Pancreas (tissue), 10 donors: ENCODE measurements at regions of chr11 and their contacts with region 1.

Region 1: DNA sequence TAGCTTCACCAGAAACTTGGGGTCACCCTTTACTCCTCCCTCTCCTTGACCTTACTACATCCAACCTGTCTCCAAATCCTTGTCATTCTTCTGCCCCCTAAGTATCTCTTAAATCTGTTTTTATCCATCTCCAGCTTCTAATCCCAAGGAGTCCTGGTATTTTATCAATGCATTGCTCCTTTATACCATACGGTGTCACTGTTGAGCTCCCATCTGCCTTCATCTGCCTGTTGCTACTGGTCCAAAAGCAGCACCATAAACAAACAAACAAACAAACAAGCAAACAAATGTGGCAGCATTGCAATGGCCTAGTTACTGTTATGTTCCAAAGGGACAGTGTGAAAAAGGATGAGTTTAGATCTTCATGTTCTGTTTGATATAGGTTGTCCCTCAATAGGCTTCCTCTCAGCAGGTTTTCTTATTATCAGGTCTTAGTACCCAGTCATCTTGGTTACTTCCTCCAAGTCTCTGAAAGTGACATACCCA is 34.2 kb downstream of the DNHD1 start:
- DNase-seq: no peak
- ATAC-seq: peak in 3 of 4 donors; percentile 79 to 83 (median 80)
- H3K4me3 ChIP-seq: no peak overlapping the region
- H3K27ac ChIP-seq: no peak overlapping the region
- H3K4me1 ChIP-seq: no peaks in the 10 kb centered on the region
- H3K27me3 ChIP-seq: no peaks in the 10 kb centered on the region
- CTCF ChIP-seq: peak; percentile 28 to 60 (median 44)

Region 2: GRCh38 chr11:6586434-6587359 is 55.4 kb after region 1 on chr11:
- intact Hi-C with region 1: no loop called
- DNase-seq: no peak
- ATAC-seq: no peak
- H3K4me3 ChIP-seq: no peak overlapping the region
- H3K27ac ChIP-seq: no peak overlapping the region
- H3K4me1 ChIP-seq: no peaks in the 10 kb centered on the region
- H3K27me3 ChIP-seq: no peaks in the 10 kb centered on the region
- CTCF ChIP-seq: no peak

Region 3: DNA sequence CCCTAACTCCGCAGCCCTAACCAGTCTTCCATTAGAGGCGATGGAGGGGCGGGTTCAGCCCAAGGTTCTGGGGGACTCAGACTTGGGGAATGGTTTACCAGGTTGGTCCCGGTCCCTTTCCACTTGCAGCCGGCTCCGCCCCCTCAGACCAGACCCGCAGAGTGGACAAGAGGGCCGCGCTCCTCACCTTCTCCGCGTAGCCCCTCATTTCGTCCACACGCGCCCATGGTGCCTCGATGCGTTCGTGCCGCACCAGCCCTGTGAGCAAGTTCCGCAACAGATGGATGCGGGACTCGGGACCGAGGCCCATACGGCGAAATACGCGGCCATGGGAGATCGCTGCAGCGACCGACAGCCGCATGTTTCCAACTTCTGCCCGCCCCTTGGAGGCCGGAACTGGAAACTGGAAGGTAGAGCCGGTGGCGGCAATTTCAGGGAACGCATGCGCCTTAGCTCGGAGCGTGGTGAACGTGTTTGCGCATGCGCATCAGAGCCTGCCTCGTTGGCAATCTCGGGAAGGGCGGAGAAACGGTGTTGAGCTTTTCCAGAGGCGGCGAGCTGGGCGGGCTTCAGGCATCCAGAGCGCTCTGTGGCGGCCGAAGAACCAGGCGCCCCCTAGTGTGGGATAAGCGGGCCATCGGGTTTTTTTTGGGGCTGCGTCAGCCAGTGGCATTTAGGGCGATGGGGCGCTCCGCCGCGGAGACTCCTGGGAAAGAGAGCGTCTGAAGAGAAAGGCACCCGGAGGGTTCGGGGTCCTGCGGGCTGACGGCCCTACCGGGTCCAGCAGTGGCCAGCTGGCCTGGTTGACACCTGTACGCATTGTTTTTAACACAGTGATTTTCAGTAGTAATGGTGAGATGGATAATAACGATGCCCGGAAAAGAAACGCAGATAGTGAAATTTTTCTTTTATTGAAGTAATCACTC is 151.9 kb after region 1 on chr11 and contains the start of gene MRPL17:
- intact Hi-C with region 1: loop called in 1 of 3 experiments (anchors 10 kb)
- DNase-seq: peak; percentile 98 to 100 (median 99)
- ATAC-seq: peak; percentile 96 to 99 (median 98)
- H3K4me3 ChIP-seq: peak within 1 kb of the TSS; percentile 48 to 82 (median 54)
- H3K27ac ChIP-seq: peak within 1 kb of the TSS; percentile 60 to 92 (median 79)
- H3K4me1 ChIP-seq: peaks cover 5 to 15% (median 11%) of the 10 kb centered on the region in 3 donors
- H3K27me3 ChIP-seq: no peaks in the 10 kb centered on the region
- CTCF ChIP-seq: peak; percentile 78 to 92 (median 84)
- total RNA-seq, gene MRPL17: 10.6 to 24.5 (median 19.8) TPM

Region 4: DNA sequence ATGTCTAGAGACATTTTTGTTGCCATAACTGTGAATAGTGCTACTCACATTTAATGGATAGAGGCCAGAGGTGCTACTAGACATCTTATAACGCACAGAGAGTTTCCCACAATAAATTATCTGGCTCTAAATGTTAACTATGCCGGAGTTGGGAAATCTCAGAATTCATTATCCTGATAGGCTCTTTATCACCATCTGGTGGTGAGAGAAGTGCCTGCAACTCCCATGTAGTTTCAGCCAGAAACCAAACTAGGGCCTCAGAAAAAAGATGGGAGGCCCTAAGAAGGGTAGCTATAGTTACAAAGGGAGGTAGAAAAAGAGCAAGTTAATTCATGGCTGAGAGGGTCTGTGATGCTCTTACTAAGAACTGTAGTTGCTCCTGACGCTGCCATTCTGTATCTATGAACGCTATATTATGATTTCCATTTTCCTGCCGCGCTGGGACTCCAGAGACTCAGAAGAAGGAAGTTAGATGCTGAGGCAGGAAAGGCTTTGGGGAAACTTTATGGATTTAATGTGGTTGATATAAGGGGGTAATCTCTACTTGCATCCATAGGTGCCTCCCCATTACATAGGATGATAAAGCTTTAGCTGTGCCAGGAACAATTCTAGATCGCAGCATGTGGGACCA is 174.7 kb after region 1 on chr11:
- intact Hi-C with region 1: loop called in 1 of 3 experiments (anchors 10 kb)
- DNase-seq: peak in 3 of 6 donors; percentile 18 to 55 (median 25)
- ATAC-seq: peak; percentile 51 to 81 (median 76)
- H3K4me3 ChIP-seq: no peak overlapping the region
- H3K27ac ChIP-seq: no peak overlapping the region
- H3K4me1 ChIP-seq: no peaks in the 10 kb centered on the region
- H3K27me3 ChIP-seq: no peaks in the 10 kb centered on the region
- CTCF ChIP-seq: peak; percentile 73 to 89 (median 81)